Naive thymus-derived CD4-positive, alpha-beta T cell (primary cell): ENCODE measurements at regions of chr17 and their contacts with region 1.

Region 1: GRCh38 chr17:68457539-68458259 is 403 bp upstream of the WIPI1 start:
- DNase-seq: peak; percentile 96 to 99 (median 97)
- ATAC-seq: peak; percentile 98
- H3K4me3 ChIP-seq: peak overlapping the region; percentile 52
- H3K4me3 Mint-ChIP-seq: peak overlapping the region; percentile 68 to 87 (median 84)
- H3K27ac ChIP-seq: peak overlapping the region; percentile 73
- H3K27ac Mint-ChIP-seq: peak overlapping the region; percentile 45 to 98 (median 91)
- H3K4me1 ChIP-seq: peaks cover 36 to 52% of the 10 kb centered on the region in 2 donors
- H3K4me1 Mint-ChIP-seq: peaks cover 26 to 66% (median 58%) of the 10 kb centered on the region in 7 donors
- H3K27me3 ChIP-seq: no peaks in the 10 kb centered on the region
- H3K27me3 Mint-ChIP-seq: no peaks in the 10 kb centered on the region

Region 2: DNA sequence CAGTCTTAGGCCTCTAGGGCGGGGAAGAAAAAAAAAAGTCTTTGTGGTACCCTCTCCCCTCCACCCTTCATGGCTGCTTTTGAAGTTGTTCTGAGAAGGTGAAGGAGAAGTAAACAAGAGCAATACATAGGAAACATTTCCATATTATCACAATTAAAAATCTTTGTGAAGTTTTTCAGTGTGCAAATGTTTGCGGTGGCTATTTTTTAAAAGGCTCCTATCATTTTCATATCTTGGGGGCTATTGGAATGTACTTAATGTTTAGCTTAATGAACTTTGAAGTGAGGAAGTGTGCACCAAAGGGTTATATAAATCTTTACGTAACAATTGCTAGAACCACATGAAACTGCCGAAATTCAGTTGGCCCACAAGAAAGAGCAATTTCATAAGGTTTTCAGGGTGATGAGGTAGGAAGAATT is 732.3 kb before region 1 on chr17:
- CTCF ChIA-PET with region 1: no interaction called
- POLR2A ChIA-PET with region 1: no interaction called
- intact Hi-C with region 1: loop called in 1 of 2 experiments (anchors 5 kb)
- DNase-seq: peak in 7 of 9 donors; percentile 55 to 84 (median 76)
- ATAC-seq: peak; percentile 87
- H3K4me3 ChIP-seq: peak overlapping the region; percentile 34
- H3K4me3 Mint-ChIP-seq: peak overlapping the region; percentile 53 to 81 (median 60)
- H3K27ac ChIP-seq: peak overlapping the region; percentile 75
- H3K27ac Mint-ChIP-seq: peak overlapping the region; percentile 84 to 98 (median 89)
- H3K4me1 ChIP-seq: peaks cover 0 to 16% of the 10 kb centered on the region in 2 donors
- H3K4me1 Mint-ChIP-seq: peaks cover 6 to 52% (median 46%) of the 10 kb centered on the region in 7 donors
- H3K27me3 ChIP-seq: no peaks in the 10 kb centered on the region
- H3K27me3 Mint-ChIP-seq: no peaks in the 10 kb centered on the region

Region 3: DNA sequence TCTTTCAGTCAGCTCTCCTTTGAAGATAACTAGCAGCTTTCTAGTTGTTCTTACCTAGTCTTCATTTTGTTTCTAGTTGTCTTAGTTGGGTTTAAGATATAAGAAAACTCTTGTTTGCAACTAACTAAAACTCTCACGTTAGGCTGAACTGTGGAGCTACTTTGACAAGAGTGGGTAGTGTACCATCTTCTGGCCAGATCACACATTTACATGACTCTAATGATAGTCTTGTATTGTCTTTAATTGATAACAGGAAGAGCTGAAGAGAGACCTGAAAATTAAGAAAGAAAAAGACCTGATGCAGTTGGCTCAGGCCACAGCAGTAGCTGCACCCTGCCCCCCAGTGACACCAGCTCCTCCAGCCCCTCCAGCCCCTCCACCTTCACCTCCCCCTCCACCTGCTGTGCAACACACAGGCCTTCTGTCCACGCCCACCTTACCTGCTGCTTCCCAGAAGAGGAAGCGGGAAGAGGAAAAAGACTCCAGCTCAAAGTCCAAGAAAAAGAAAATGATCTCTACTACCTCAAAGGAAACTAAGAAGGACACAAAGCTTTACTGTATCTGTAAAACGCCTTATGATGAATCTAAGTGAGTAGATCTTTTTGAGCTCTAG is 498.3 kb before region 1 on chr17:
- CTCF ChIA-PET with region 1: interaction called, 3 read pairs
- POLR2A ChIA-PET with region 1: no interaction called
- intact Hi-C with region 1: loop called in 1 of 2 experiments (anchors 5 kb)
- DNase-seq: no peak
- ATAC-seq: no peak
- H3K4me3 ChIP-seq: no peak overlapping the region
- H3K4me3 Mint-ChIP-seq: no peak overlapping the region
- H3K27ac ChIP-seq: no peak overlapping the region
- H3K27ac Mint-ChIP-seq: peak overlapping the region in 8 of 9 donors; percentile 8 to 79 (median 54)
- H3K4me1 ChIP-seq: no peaks in the 10 kb centered on the region
- H3K4me1 Mint-ChIP-seq: peaks cover 0 to 6% (median 5%) of the 10 kb centered on the region in 7 donors
- H3K27me3 ChIP-seq: no peaks in the 10 kb centered on the region
- H3K27me3 Mint-ChIP-seq: no peaks in the 10 kb centered on the region

Region 4: GRCh38 chr17:68101075-68101992 is 356.4 kb before region 1 on chr17:
- CTCF ChIA-PET with region 1: no interaction called
- POLR2A ChIA-PET with region 1: no interaction called
- intact Hi-C with region 1: loop called (anchors 5 kb)
- DNase-seq: peak in 8 of 9 donors; percentile 36 to 71 (median 46)
- ATAC-seq: peak; percentile 92
- H3K4me3 ChIP-seq: peak overlapping the region; percentile 75
- H3K4me3 Mint-ChIP-seq: peak overlapping the region; percentile 86 to 99 (median 95)
- H3K27ac ChIP-seq: peak overlapping the region; percentile 85
- H3K27ac Mint-ChIP-seq: peak overlapping the region; percentile 83 to 98 (median 95)
- H3K4me1 ChIP-seq: peaks cover 3 to 20% of the 10 kb centered on the region in 2 donors
- H3K4me1 Mint-ChIP-seq: peaks cover 15 to 42% (median 33%) of the 10 kb centered on the region in 7 donors
- H3K27me3 ChIP-seq: no peaks in the 10 kb centered on the region
- H3K27me3 Mint-ChIP-seq: peaks cover 0 to 12% (median 0%) of the 10 kb centered on the region in 5 donors

Region 5: DNA sequence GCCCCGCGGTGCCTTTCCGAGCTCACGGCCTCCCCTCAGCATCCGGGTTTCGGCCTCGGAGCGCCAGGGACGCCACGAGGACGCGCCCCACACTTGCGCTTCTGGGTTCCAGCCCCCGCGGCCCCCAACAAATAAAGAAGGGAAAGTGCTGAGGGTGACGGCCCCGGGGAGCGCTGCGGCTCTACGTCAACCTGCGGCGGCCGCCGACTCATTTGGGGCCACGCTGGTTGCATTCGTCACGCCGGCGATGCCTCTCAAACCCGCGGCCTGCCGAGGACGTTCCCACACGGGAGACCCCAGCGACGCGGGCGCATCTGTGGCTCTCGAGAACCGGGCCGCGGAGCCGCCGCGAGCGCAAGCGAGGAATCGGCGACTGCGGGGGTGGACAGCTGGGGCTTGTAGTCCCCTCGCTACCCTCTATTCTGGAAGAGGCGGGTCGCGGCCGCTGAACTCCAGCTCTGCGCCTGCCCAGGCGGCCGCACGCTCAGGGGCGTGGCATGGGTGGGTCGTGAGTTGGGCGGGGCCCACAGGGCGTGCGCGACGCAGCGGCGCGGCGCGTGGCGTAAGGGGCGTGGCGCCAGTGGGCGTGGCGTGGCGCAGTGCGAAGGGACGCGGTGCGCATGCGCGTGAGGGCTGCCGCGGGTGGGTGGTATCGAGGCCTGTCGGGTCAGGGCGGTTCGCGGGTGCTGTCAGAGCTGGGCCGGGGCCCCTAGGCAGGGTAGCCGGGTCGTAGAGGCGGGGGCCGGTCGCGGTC is 210.1 kb before region 1 on chr17 and contains the start of gene AMZ2:
- CTCF ChIA-PET with region 1: interaction called, 5 read pairs
- POLR2A ChIA-PET with region 1: interaction called, 25 read pairs
- intact Hi-C with region 1: loop called (anchors 1 kb)
- DNase-seq: peak; percentile 92 to 100 (median 97)
- ATAC-seq: peak; percentile 96
- H3K4me3 ChIP-seq: peak within 1 kb of the TSS; percentile 89
- H3K4me3 Mint-ChIP-seq: peak within 1 kb of the TSS; percentile 80 to 96 (median 92)
- H3K27ac ChIP-seq: peak within 1 kb of the TSS; percentile 99
- H3K27ac Mint-ChIP-seq: peak within 1 kb of the TSS; percentile 78 to 99 (median 97)
- H3K4me1 ChIP-seq: peaks cover 18 to 36% of the 10 kb centered on the region in 2 donors
- H3K4me1 Mint-ChIP-seq: peaks cover 11 to 52% (median 31%) of the 10 kb centered on the region in 7 donors
- H3K27me3 ChIP-seq: no peaks in the 10 kb centered on the region
- H3K27me3 Mint-ChIP-seq: no peaks in the 10 kb centered on the region
- total RNA-seq, gene AMZ2: 47.6 to 85.5 (median 73.8) TPM

Region 6: GRCh38 chr17:68435876-68436842 is 21.5 kb before region 1 on chr17:
- CTCF ChIA-PET with region 1: interaction called, 23 read pairs
- POLR2A ChIA-PET with region 1: interaction called, 133 read pairs
- intact Hi-C with region 1: loop called (anchors 1 kb)
- DNase-seq: peak; percentile 62 to 87 (median 82)
- ATAC-seq: peak; percentile 90
- H3K4me3 ChIP-seq: no peak overlapping the region
- H3K4me3 Mint-ChIP-seq: peak overlapping the region; percentile 3 to 78 (median 62)
- H3K27ac ChIP-seq: no peak overlapping the region
- H3K27ac Mint-ChIP-seq: peak overlapping the region; percentile 1 to 94 (median 41)
- H3K4me1 ChIP-seq: peaks cover 32% of the 10 kb centered on the region in 2 donors
- H3K4me1 Mint-ChIP-seq: peaks cover 30 to 67% (median 51%) of the 10 kb centered on the region in 7 donors
- H3K27me3 ChIP-seq: no peaks in the 10 kb centered on the region
- H3K27me3 Mint-ChIP-seq: no peaks in the 10 kb centered on the region

Region 7: DNA sequence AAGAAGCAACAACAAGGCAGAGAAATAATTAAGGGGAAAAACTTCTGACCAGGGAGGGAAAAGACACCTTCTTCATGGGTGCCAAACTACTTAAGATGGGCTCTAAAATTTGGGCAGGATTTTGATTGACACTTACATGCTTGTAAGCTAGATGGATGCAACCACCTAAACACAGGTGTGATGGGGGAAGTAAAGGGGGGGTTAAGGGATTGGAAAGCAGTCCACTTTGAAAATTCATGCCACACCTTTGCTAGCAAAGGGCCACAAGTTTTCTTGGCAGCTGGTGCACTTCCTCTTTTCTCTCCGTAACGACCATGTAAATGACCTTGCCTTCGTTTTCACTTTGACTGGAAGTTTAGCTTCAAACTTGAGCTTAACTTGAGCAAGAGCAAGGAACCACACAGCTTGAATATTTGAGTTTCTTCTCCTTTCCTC is 40.2 kb after region 1 on chr17:
- CTCF ChIA-PET with region 1: no interaction called
- POLR2A ChIA-PET with region 1: no interaction called
- intact Hi-C with region 1: no loop called
- DNase-seq: no peak
- ATAC-seq: peak; percentile 50
- H3K4me3 ChIP-seq: no peak overlapping the region
- H3K4me3 Mint-ChIP-seq: peak overlapping the region in 2 of 10 donors; percentile 10 to 60
- H3K27ac ChIP-seq: no peak overlapping the region
- H3K27ac Mint-ChIP-seq: peak overlapping the region in 1 of 9 donors; percentile 84
- H3K4me1 ChIP-seq: no peaks in the 10 kb centered on the region
- H3K4me1 Mint-ChIP-seq: peaks cover 10 to 36% (median 14%) of the 10 kb centered on the region in 7 donors
- H3K27me3 ChIP-seq: no peaks in the 10 kb centered on the region
- H3K27me3 Mint-ChIP-seq: peaks cover 0 to 4% (median 0%) of the 10 kb centered on the region in 5 donors

Region 8: GRCh38 chr17:68542698-68543463 is 85.2 kb after region 1 on chr17:
- CTCF ChIA-PET with region 1: no interaction called
- POLR2A ChIA-PET with region 1: no interaction called
- intact Hi-C with region 1: no loop called
- DNase-seq: no peak
- ATAC-seq: no peak
- H3K4me3 ChIP-seq: no peak overlapping the region
- H3K4me3 Mint-ChIP-seq: no peak overlapping the region
- H3K27ac ChIP-seq: no peak overlapping the region
- H3K27ac Mint-ChIP-seq: no peak overlapping the region
- H3K4me1 ChIP-seq: no peaks in the 10 kb centered on the region
- H3K4me1 Mint-ChIP-seq: peaks cover 0 to 7% (median 4%) of the 10 kb centered on the region in 7 donors
- H3K27me3 ChIP-seq: no peaks in the 10 kb centered on the region
- H3K27me3 Mint-ChIP-seq: no peaks in the 10 kb centered on the region

Region 9: DNA sequence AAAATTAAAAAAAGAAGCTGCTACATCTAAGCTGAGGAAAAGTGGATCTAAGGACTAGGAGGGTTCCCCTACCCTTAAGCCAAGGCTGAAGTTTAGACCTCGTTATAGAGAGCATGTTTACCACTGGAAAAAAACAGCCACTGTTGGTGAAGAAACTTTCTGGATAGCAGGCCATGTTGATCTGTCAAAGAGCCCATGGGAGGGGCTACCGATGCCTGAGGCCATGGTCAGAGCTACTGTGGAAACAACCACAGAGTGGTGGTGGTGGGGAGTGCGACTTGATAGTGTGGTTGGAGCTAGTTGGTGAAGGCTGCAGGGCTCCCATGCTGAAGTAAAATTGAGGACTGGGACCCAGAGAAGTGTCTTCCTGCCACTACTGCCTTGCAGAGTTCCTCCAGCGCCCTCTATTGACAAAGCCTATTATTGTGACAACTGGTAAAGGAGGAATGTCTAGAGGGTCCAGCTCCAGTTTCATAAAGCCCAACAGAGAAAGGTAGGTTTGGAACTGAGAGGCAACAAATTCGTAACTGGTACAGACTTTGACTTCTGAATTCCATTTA is 156.1 kb after region 1 on chr17:
- CTCF ChIA-PET with region 1: no interaction called
- POLR2A ChIA-PET with region 1: no interaction called
- intact Hi-C with region 1: no loop called
- DNase-seq: peak in 1 of 9 donors; percentile 32
- ATAC-seq: peak; percentile 46
- H3K4me3 ChIP-seq: no peak overlapping the region
- H3K4me3 Mint-ChIP-seq: no peak overlapping the region
- H3K27ac ChIP-seq: no peak overlapping the region
- H3K27ac Mint-ChIP-seq: no peak overlapping the region
- H3K4me1 ChIP-seq: no peaks in the 10 kb centered on the region
- H3K4me1 Mint-ChIP-seq: no peaks in the 10 kb centered on the region
- H3K27me3 ChIP-seq: peaks cover 0 to 3% of the 10 kb centered on the region in 2 donors
- H3K27me3 Mint-ChIP-seq: peaks cover 21 to 49% (median 41%) of the 10 kb centered on the region in 5 donors